Aorta (tissue), 5 donors: ENCODE measurements at regions of chr11 and their contacts with region 1.

Region 1: GRCh38 chr11:133951327-133952198 is 5.2 kb downstream of the IGSF9B start:
- DNase-seq: no peak
- ATAC-seq: peak; percentile 23
- H3K4me3 ChIP-seq: peak overlapping the region in 1 of 2 donors; percentile 24
- H3K27ac ChIP-seq: peak overlapping the region; percentile 15 to 85
- H3K4me1 ChIP-seq: peaks cover 3 to 4% of the 10 kb centered on the region in 2 donors
- H3K27me3 ChIP-seq: no peaks in the 10 kb centered on the region

Region 2: GRCh38 chr11:133834682-133835592 is 116.6 kb before region 1 on chr11:
- intact Hi-C with region 1: no loop called
- DNase-seq: no peak
- ATAC-seq: peak; percentile 61
- H3K4me3 ChIP-seq: no peak overlapping the region
- H3K27ac ChIP-seq: no peak overlapping the region
- H3K4me1 ChIP-seq: no peaks in the 10 kb centered on the region
- H3K27me3 ChIP-seq: no peaks in the 10 kb centered on the region

Region 3: DNA sequence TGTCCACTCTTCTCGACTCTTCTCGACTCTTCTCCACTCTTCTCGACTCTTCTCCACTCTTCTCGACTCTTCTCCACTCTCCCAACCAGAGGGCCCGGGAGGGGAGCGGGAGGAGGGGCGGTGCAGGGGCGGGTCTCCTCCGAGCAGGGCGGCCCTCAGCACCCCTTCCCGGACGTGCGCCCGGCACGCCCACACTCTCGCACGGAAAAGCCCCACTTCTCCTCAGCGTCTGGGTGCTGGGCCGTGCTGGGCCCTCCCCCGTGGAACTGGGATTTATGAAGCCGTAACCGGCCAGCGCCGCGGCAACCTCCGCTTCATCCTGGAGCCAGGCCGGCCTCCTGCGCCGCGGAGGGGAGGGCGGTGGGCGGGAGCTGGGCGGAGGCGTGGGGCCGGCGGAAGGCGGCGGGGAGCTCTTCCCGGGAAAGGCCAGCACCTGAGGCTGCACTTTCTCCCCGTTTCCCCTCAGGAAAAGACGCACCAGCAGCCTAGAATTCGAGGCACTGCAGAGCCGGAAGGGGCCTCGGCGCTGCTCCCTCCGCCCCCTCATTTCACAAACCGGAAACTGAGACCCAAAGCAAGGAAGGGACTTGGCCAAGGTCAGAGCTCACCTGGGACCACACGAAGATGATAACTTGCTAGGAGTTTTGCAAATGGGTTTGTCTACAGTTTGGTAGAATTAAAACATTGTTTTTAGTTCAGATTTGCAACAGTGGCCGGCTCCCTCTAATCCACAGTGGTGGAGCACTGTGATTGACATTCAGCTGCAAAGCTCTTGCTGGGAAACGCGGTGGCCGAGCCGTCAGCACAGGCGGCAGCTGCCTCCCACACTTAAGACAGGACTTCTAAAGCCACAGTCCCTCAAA is 85.7 kb after region 1 on chr11:
- intact Hi-C with region 1: loop called in 1 of 2 experiments (anchors 5 kb)
- DNase-seq: peak; percentile 91 to 92
- ATAC-seq: peak; percentile 81
- H3K4me3 ChIP-seq: peak overlapping the region; percentile 9 to 52
- H3K27ac ChIP-seq: peak overlapping the region; percentile 4 to 71
- H3K4me1 ChIP-seq: no peaks in the 10 kb centered on the region
- H3K27me3 ChIP-seq: no peaks in the 10 kb centered on the region

Region 4: DNA sequence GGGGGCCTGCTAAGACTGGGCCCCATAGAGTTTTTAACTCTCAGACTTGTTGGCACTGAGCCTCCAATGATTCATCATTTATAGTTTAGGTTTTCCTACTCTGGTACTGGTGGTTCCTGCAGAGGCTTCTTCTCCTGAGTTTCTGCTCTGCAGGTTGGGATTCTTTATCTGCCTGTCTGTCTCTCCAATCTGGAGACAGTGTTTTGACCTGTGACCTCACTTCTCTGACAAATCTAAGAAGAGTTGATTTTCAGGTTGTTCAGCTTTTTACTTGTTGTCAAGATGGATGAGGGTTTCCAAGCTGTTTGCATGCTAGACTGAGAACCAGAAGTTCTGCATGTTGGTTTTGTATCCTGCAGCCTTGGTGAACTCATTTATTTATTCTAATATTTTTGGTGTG is 181.2 kb after region 1 on chr11:
- intact Hi-C with region 1: loop called in 1 of 2 experiments (anchors 5 kb)
- DNase-seq: no peak
- ATAC-seq: no peak
- H3K4me3 ChIP-seq: no peak overlapping the region
- H3K27ac ChIP-seq: peak overlapping the region; percentile 14 to 51
- H3K4me1 ChIP-seq: peaks cover 0 to 3% of the 10 kb centered on the region in 2 donors
- H3K27me3 ChIP-seq: no peaks in the 10 kb centered on the region